ENCODE measurements at regions of chr2 and their contacts with region 1.

Region 1: GRCh38 chr2:159090514-159091201 is 122.2 kb downstream of the TANC1 start:
- DNase-seq: peak; percentile 67
- H3K4me3 ChIP-seq: no peak overlapping the region
- H3K27ac ChIP-seq: peak overlapping the region; percentile 50 to 62
- H3K4me1 ChIP-seq: peaks cover 45% of the 10 kb centered on the region
- H3K27me3 ChIP-seq: no peaks in the 10 kb centered on the region
- CTCF ChIP-seq: no peak
- POLR2A ChIP-seq: no peak

Region 2: GRCh38 chr2:159053161-159054031 is 37.3 kb before region 1 on chr2:
- intact Hi-C with region 1: loop called (anchors 2 kb)
- DNase-seq: no peak
- H3K4me3 ChIP-seq: no peak overlapping the region
- H3K27ac ChIP-seq: no peak overlapping the region
- H3K4me1 ChIP-seq: no peaks in the 10 kb centered on the region
- H3K27me3 ChIP-seq: no peaks in the 10 kb centered on the region
- CTCF ChIP-seq: no peak
- POLR2A ChIP-seq: no peak